Activated CD4-positive, alpha-beta memory T cell treated with anti-CD3 and anti-CD28 coated beads, Interleukin-2, amount 10 ng/mL, durations not matched to agents 7 days and 5 days (primary cell): ENCODE measurements at regions of chr4 and their contacts with region 1.

Region 1: GRCh38 chr4:169619959-169620879 is at the start of gene CLCN3:
- DNase-seq: peak; percentile 91
- H3K4me3 Mint-ChIP-seq: peak within 1 kb of the TSS; percentile 93
- H3K27ac Mint-ChIP-seq: peak within 1 kb of the TSS; percentile 99
- H3K4me1 Mint-ChIP-seq: peaks cover 55% of the 10 kb centered on the region
- H3K27me3 Mint-ChIP-seq: no peaks in the 10 kb centered on the region
- total RNA-seq, gene CLCN3: 24.5 to 26.4 TPM

Region 2: DNA sequence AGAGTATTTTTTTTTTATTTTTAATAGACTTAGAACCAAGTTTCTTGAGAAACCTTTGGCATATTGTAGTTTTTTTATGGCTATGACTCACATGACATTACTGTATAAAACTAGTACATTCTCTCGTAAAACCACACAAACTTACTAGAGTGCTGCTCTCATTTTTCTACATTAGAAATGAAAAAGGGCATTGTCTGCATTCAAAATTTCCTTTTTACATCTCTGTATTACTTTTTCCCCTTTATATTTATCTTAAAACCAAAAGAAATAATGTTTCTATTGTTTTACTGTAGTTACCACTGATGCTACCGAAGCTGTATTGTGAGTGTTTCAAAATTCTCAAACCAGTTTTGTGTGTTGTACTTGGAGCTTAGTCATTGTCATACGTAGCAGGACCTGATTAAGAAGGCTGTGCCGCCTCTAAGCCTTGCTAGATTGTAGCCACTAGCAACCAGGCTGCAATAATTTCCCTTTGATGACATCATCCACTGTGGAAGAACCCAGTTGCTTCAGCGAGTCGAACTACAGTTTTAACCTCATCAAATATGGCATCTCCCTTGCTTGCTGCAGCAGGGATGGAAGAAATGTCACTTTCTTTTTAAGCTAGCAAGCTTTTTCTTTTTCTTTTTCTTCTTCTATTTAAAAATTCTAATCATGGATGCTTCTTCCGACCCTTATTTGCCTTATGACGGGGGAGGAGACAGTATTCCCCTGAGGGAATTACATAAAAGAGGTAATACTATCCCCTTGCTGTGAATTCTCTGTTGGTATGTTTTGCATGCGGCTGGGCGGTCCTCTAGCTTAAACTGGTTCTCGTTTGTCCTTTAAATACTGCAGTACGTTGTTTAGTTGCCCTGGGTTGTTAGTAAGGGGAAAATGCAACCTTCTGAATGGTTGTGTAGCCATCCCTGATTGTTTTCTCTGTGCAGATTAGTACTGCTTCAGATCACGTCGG is 39.8 kb after region 1 on chr4:
- CTCF ChIA-PET with region 1: interaction called, 11 read pairs
- POLR2A ChIA-PET with region 1: interaction called, 40 read pairs
- DNase-seq: peak; percentile 69
- H3K4me3 Mint-ChIP-seq: peak overlapping the region; percentile 56
- H3K27ac Mint-ChIP-seq: peak overlapping the region; percentile 73
- H3K4me1 Mint-ChIP-seq: peaks cover 17% of the 10 kb centered on the region
- H3K27me3 Mint-ChIP-seq: no peaks in the 10 kb centered on the region

Region 3: DNA sequence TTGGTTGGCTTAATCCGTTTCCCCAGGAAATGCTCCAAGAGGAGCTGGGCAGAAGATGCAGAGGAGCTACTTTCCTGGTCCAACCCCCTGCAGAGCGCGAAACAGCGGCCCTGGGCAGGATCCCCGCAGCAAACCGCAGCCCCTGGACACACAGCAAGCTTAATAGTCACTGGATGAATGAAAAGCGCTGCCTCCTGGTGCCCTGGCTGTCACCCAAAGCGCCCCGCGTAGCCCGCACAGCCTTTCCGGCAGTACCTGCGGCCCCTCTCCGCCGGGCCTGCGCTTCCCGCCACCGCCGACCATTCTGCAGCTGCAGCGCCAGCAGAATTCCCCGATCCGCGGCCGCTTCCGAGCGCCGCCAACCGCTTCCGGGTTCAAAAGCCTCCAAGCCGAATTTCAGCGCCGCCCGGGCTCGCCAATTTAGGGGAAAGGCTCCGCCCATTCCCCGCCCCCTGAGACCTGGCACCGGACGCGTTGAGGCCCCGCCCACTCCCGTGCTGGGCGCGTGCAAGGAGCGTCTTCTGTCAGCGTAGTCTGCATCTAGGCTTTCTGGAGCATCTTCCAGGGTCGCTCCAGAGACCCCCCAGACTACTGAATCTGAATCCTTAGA is 137.5 kb after region 1 on chr4 and contains the start of gene HPF1:
- CTCF ChIA-PET with region 1: interaction called, 3 read pairs
- POLR2A ChIA-PET with region 1: interaction called, 11 read pairs
- DNase-seq: peak; percentile 95
- H3K4me3 Mint-ChIP-seq: peak within 1 kb of the TSS; percentile 84
- H3K27ac Mint-ChIP-seq: peak within 1 kb of the TSS; percentile 27
- H3K4me1 Mint-ChIP-seq: peaks cover 28% of the 10 kb centered on the region
- H3K27me3 Mint-ChIP-seq: peaks cover 9% of the 10 kb centered on the region
- total RNA-seq, gene HPF1: 20.5 to 23.4 TPM